KBM-7 (cell line): ENCODE measurements at regions of chr5 and their contacts with region 1.

Region 1: DNA sequence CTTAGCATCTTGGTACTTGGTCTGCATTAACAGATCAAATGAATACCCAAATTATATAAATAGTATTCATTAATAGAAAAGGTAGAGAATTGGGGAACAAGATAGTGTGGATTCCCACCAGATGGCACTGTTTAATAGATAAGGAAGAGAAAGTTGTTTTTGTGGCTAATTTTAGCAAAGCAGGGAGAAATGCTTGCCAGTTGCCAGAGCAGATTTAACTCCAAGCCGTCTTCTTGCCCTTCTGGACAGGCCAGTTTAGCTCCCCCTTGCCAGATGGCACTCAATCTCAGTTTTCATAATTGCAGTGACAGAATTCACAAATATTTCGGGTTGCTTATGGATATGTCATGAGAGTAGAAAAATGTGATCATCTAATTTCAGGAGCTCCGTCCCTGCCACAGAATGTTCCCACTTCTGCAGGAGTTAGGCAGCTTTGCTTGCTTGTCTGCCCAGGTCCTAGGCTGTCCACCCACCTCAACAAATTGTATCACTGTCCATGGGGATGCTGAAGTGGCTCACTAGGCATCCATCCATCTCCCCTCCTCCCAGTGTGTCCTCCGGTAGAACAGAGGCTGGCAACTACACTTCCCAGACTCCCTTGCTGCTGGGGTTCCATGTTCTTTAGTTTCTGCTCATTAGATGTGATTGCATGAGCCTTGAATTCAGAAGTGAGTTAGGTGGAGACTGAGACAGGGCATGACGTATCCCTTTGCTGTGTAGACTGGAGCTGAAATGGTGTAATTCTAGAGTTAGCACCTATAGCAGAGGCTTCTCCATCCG is 11.8 kb upstream of the HEXB start:
- DNase-seq: peak; percentile 51

Region 2: DNA sequence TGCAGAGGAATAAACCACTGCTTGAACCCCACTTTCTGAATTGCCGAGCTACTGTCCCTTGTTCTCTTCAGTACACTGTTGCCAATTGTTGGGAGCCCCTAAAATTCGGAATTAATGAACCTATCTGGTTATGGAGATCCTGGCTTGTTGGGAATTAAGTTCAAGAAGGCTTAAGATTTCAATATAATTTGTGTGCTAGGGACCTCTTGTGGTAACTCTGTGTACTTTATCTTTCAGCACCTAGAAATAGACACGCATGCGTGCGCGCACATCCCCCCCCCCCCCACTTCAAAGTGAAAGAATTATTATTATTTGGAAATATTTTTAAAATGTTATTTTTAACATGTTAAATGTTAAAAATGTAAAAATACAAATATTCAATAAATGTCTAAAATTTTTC is 246.3 kb after region 1 on chr5:
- in situ Hi-C with region 1: loop called (anchors 25 kb)
- DNase-seq: peak; percentile 58